ENCODE measurements at regions of chr1 and their contacts with region 1.

Region 1: DNA sequence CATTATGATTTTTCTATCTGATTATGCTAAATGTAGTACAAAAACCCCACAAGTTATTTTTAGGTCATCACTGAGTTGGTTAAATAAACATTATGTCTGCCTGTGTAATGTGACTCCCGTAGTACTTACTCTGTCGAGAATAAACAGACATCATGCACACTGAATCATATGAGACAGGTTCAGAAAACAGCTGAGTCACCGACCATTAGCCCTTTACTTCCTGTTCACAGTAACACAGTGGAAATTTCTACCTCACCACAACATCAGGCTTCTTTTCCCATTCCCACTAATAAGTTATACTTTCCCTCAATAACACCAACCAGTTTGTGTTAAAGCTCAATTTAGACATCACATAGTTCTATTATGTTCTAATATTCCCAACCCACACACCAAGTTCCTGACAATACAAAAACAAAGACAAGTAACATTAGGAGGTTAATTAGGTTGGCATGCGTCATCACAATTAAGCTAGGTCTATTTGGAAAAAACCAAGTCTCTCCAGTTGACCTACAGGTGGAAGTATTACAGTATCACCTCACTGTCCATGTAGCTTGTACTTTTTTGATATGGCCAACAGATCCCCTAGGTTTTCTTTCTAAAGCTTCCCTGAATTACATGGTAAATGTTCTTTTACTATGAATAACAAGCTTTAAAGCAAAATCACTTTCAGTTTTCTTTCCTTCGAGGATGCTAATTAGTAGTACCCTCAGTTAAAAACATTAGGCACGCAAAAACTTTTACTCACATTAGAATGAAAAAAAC is 154.2 kb downstream of the EIF4G3 start:
- DNase-seq: peak; percentile 76 to 90 (median 90)
- H3K4me3 ChIP-seq: peak overlapping the region; percentile 24 to 72 (median 56)
- H3K4me3 Mint-ChIP-seq: peak overlapping the region; percentile 65 to 85
- H3K27ac ChIP-seq: peak overlapping the region in 1 of 2 donors; percentile 77
- H3K27ac Mint-ChIP-seq: peak overlapping the region; percentile 86 to 97 (median 93)
- H3K4me1 ChIP-seq: peaks cover 9 to 16% of the 10 kb centered on the region in 2 donors
- H3K4me1 Mint-ChIP-seq: peaks cover 16% of the 10 kb centered on the region
- H3K27me3 ChIP-seq: no peaks in the 10 kb centered on the region
- H3K27me3 Mint-ChIP-seq: no peaks in the 10 kb centered on the region
- CTCF ChIP-seq: no peak

Region 2: DNA sequence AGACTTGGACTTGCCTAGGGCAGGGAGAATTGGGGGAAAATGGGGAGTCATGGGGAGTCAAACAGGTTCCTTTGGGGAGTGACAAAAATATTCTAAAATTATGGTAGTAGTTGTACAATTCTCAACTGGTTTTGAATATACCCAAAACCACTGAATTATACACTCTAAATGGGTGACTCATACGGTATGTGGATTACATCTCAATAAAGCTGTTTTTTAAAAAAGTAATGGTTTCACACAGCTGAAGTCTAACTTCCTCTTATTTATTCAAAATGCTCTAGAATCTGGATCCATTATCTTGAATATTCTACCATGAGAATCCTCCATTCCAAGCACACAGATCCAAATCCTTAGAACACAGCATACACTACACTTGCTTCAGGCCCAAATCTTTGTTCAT is 143.2 kb after region 1 on chr1:
- intact Hi-C with region 1: no loop called
- DNase-seq: peak in 2 of 3 donors; percentile 46 to 61
- H3K4me3 ChIP-seq: no peak overlapping the region
- H3K4me3 Mint-ChIP-seq: no peak overlapping the region
- H3K27ac ChIP-seq: peak overlapping the region in 1 of 2 donors; percentile 44
- H3K27ac Mint-ChIP-seq: peak overlapping the region; percentile 22 to 92 (median 62)
- H3K4me1 ChIP-seq: peaks cover 8 to 10% of the 10 kb centered on the region in 2 donors
- H3K4me1 Mint-ChIP-seq: peaks cover 15% of the 10 kb centered on the region
- H3K27me3 ChIP-seq: no peaks in the 10 kb centered on the region
- H3K27me3 Mint-ChIP-seq: no peaks in the 10 kb centered on the region
- CTCF ChIP-seq: no peak

Region 3: GRCh38 chr1:21176586-21177555 is 154.4 kb after region 1 on chr1 and contains the start of gene EIF4G3:
- intact Hi-C with region 1: loop called in 1 of 2 experiments (anchors 5 kb)
- DNase-seq: peak; percentile 94 to 97 (median 94)
- H3K4me3 ChIP-seq: peak within 1 kb of the TSS; percentile 56 to 97 (median 93)
- H3K4me3 Mint-ChIP-seq: peak within 1 kb of the TSS; percentile 88 to 92
- H3K27ac ChIP-seq: peak within 1 kb of the TSS; percentile 93 to 97
- H3K27ac Mint-ChIP-seq: peak within 1 kb of the TSS; percentile 91 to 99 (median 97)
- H3K4me1 ChIP-seq: peaks cover 24 to 26% of the 10 kb centered on the region in 2 donors
- H3K4me1 Mint-ChIP-seq: peaks cover 20% of the 10 kb centered on the region
- H3K27me3 ChIP-seq: no peaks in the 10 kb centered on the region
- H3K27me3 Mint-ChIP-seq: peaks cover 0 to 5% (median 2%) of the 10 kb centered on the region in 3 donors
- CTCF ChIP-seq: no peak
- polyA plus RNA-seq, gene EIF4G3: 5.1 to 34.2 (median 5.8) TPM